ENCODE measurements at regions of chr21 and their contacts with region 1.

Region 1: DNA sequence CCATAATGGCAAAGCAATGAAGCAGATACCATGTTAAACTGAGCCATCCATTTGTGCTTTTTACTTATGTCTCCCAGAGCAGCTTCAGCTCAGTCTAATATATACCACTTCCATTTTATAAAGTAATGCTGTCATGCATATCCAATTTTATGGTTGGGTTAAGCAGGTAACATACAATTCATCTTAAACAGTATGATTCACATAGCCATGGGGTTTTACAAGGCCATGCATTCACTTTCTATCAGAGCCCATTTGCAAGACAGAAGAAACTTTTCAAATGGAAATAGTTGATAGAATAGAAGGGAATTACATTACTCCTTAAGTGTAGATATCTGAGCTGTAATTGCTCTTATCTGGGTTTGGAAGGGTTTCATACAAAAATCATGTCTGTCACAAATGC is 580.5 kb upstream of the CXADR start:
- DNase-seq: no peak
- ATAC-seq: no peak
- H3K4me3 ChIP-seq: no peak overlapping the region
- H3K4me3 Mint-ChIP-seq: no peak overlapping the region
- H3K27ac ChIP-seq: no peak overlapping the region
- H3K27ac Mint-ChIP-seq: no peak overlapping the region
- H3K4me1 ChIP-seq: no peaks in the 10 kb centered on the region
- H3K4me1 Mint-ChIP-seq: no peaks in the 10 kb centered on the region
- H3K27me3 ChIP-seq: no peaks in the 10 kb centered on the region
- H3K27me3 Mint-ChIP-seq: no peaks in the 10 kb centered on the region
- CTCF ChIP-seq: no peak

Region 2: DNA sequence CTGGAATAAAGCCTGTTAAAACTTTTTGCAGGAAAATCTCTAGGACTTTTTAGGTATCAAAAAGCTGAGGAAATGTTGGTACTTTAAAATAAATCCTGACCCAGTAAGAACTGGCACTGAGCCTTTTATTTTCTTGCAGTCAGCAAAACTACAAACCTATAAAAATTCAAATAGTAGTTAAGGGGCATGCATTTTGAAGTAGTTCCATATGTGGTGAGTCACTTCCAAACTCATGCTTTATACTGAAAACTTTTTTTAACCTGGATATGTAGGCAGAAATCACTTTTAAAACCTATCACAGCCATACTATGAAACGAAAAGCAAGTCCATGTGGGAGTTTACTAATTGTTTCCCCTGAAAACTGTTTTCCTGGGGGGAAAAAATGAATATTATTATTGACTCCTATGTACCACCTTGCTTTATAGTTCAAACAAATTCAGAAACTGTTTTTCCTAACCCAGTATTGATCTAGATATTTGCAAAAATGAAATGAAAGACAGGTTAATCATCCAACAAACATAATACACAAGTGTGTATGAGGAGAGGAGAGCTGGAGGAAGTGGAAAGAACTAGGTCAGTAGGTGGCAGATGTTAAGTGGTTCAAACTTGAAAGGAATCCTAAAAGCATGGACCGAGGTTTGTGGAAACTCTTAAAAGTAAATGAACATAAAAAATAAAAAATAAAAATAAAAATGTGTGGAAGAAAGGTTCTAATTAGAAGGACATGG is 1898.0 kb before region 1 on chr21:
- CTCF ChIA-PET with region 1: no interaction called
- POLR2A ChIA-PET with region 1: no interaction called
- intact Hi-C with region 1: no loop called
- DNase-seq: no peak
- ATAC-seq: no peak
- H3K4me3 ChIP-seq: no peak overlapping the region
- H3K4me3 Mint-ChIP-seq: no peak overlapping the region
- H3K27ac ChIP-seq: no peak overlapping the region
- H3K27ac Mint-ChIP-seq: no peak overlapping the region
- H3K4me1 ChIP-seq: no peaks in the 10 kb centered on the region
- H3K4me1 Mint-ChIP-seq: peaks cover 42% of the 10 kb centered on the region
- H3K27me3 ChIP-seq: no peaks in the 10 kb centered on the region
- H3K27me3 Mint-ChIP-seq: no peaks in the 10 kb centered on the region
- CTCF ChIP-seq: no peak

Region 3: DNA sequence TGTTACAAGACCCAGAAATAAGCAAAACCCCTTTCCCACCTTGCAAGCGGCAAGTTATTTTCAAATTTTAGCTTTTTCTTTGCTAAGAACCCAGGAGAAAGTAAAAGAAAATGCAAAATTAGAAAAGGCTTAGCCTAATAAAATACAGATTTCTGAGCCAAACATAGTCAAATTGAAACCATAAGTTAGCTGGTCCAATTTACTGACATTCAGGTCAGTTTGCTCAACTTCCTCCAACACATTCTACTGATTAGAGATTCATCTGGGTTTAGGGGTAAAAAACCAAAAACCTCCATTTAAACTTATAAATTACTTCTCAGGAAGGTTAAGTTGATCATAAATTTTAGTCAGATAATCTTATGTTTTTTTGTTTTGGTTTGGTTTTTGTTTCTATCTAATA is 121.3 kb before region 1 on chr21:
- CTCF ChIA-PET with region 1: no interaction called
- POLR2A ChIA-PET with region 1: no interaction called
- intact Hi-C with region 1: no loop called
- DNase-seq: no peak
- ATAC-seq: no peak
- H3K4me3 ChIP-seq: no peak overlapping the region
- H3K4me3 Mint-ChIP-seq: no peak overlapping the region
- H3K27ac ChIP-seq: no peak overlapping the region
- H3K27ac Mint-ChIP-seq: no peak overlapping the region
- H3K4me1 ChIP-seq: no peaks in the 10 kb centered on the region
- H3K4me1 Mint-ChIP-seq: no peaks in the 10 kb centered on the region
- H3K27me3 ChIP-seq: no peaks in the 10 kb centered on the region
- H3K27me3 Mint-ChIP-seq: no peaks in the 10 kb centered on the region
- CTCF ChIP-seq: no peak

Region 4: GRCh38 chr21:16956824-16957223 is 24.5 kb after region 1 on chr21:
- CTCF ChIA-PET with region 1: no interaction called
- POLR2A ChIA-PET with region 1: no interaction called
- intact Hi-C with region 1: loop called in 1 of 2 experiments (anchors 2 kb)
- DNase-seq: no peak
- ATAC-seq: no peak
- H3K4me3 ChIP-seq: no peak overlapping the region
- H3K4me3 Mint-ChIP-seq: no peak overlapping the region
- H3K27ac ChIP-seq: no peak overlapping the region
- H3K27ac Mint-ChIP-seq: no peak overlapping the region
- H3K4me1 ChIP-seq: no peaks in the 10 kb centered on the region
- H3K4me1 Mint-ChIP-seq: no peaks in the 10 kb centered on the region
- H3K27me3 ChIP-seq: no peaks in the 10 kb centered on the region
- H3K27me3 Mint-ChIP-seq: no peaks in the 10 kb centered on the region
- CTCF ChIP-seq: no peak